Right ventricle myocardium inferior (tissue), 1 donor: ENCODE measurements at regions of chr1 and their contacts with region 1.

Region 1: GRCh38 chr1:203440771-203441170 is 34.8 kb upstream of the PRELP start:
- DNase-seq: peak; percentile 87
- ATAC-seq: peak; percentile 96

Region 2: DNA sequence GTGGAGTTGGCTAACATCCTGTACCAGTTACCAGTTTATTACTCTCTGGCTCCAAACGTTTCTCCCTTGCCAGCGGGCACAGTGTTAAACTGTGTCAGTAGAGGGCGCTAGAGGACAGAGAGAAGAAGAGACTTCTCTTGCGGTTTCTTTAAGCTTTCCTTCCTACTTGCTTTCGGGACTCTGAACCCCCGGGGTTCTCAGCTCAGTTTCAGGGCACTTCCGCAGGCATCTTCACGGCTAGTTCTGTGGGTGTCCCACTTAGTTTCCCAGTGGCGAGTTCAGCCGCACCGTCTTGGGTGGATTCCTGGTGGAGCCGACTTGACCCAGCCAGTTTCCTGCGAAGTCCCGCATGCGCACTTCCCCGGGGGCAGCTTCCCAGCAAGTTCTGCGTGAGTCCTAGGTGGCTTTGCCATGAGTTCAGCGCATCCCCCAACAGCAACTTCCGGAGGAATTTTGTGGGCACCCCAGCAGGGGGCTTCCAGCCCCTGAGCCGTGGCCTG is 173.4 kb before region 1 on chr1:
- intact Hi-C with region 1: loop called (anchors 2 kb)
- DNase-seq: peak; percentile 86
- ATAC-seq: peak; percentile 75

Region 3: GRCh38 chr1:203504397-203505250 is 63.9 kb after region 1 on chr1:
- intact Hi-C with region 1: no loop called
- DNase-seq: peak; percentile 85
- ATAC-seq: peak; percentile 49